ENCODE measurements at regions of chr16 and their contacts with region 1.

Region 1: DNA sequence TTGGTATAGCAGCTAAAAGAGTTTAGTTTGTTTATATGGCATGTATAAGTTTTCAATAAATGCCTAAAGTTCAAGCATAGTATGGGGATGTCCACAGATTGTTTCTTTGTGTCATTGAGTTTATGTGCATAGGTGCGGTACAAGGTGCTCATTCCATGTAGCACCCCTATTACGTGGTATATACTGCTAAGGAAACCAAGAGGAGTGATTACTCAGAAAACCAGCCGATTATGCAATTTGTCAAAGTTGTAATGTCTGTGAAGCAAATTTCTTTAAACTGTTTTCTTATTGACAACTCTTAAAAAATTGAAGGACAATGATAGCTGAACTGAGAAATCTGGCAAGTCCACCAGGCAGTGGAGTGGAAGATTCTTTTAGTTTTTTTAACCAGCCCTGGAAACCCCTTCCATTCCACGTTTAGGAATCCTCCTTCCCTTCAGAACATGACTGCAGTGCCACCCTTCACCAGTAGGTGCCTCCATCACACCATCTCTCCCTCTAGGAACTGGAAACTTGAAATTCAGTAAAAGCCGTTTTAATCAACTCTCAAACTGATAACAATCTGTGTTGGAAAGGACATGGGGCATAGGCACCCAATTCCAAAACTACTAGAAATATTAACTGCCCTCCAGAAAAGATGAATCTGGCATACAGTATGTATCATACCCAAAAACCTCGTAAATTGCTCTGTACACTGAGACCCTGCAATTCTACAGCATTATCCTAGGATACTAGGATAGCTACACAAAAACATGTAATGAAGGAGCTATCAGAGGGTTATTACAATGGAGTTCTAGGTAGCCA is 43.5 kb downstream of the REXO5 start:
- DNase-seq: peak; percentile 81
- H3K4me3 ChIP-seq: no peak overlapping the region
- H3K27ac ChIP-seq: no peak overlapping the region
- H3K4me1 ChIP-seq: peaks cover 42% of the 10 kb centered on the region
- H3K27me3 ChIP-seq: no peaks in the 10 kb centered on the region
- CTCF ChIP-seq: peak; percentile 88 to 96
- POLR2A ChIP-seq: peak; percentile 3

Region 2: GRCh38 chr16:20660325-20660724 is 189.5 kb before region 1 on chr16:
- CTCF ChIA-PET with region 1: no interaction called
- POLR2A ChIA-PET with region 1: no interaction called
- dilution Hi-C with region 1: no loop called
- intact Hi-C with region 1: no loop called
- DNase-seq: no peak
- H3K4me3 ChIP-seq: no peak overlapping the region
- H3K27ac ChIP-seq: no peak overlapping the region
- H3K4me1 ChIP-seq: no peaks in the 10 kb centered on the region
- H3K27me3 ChIP-seq: no peaks in the 10 kb centered on the region
- CTCF ChIP-seq: no peak
- POLR2A ChIP-seq: no peak

Region 3: DNA sequence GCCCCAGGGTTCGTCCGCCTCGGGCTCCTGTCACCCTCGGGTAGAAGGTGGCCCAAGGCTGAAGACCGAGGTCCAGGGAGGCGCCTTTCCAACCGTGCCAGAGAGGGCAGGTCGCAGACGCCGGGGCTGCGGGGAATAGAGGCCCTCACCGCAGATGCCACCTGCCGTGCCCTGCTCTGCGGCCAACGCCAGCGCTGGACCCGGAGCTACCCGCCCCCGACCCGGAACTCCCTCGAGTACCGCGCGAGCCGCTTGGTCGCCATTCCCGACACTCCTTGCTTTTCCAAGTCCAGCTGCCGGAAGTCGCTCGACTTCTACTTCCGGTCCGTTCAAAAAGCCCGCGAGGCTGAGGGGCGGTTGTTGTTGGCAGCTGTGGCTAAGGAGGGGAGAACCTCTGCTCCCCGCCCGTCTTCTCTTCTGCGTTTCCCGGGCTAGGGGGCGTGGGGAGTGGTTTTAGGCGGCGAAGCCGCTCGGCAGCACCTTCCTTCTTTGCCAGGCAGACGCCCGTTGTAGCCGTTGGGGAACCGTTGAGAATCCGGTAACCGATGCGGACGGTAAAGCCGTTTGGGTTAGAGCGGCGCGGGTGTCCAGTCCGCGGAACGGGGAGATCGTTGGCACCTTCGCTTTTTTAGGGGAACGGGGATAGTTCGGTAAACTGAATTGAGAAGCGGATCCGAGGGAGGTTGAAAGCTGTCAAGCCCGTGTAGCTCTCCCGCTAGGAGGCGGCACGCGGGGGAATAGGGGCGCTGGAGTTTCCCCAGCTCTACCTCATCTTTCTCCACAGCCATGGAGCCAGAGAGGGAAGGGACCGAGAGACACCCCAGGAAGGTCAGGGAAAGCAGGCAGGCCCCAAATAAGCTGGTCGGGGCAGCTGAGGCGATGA is 43.4 kb before region 1 on chr16 and contains the starts of genes ERI2 and REXO5:
- CTCF ChIA-PET with region 1: interaction called, 15 read pairs
- POLR2A ChIA-PET with region 1: interaction called, 3 read pairs
- dilution Hi-C with region 1: no loop called
- intact Hi-C with region 1: no loop called
- DNase-seq: peak; percentile 94
- H3K4me3 ChIP-seq: peak within 1 kb of the TSS; percentile 44 to 68 (median 50)
- H3K27ac ChIP-seq: peak within 1 kb of the TSS; percentile 49
- H3K4me1 ChIP-seq: peaks cover 8% of the 10 kb centered on the region
- H3K27me3 ChIP-seq: no peaks in the 10 kb centered on the region
- CTCF ChIP-seq: peak; percentile 36 to 66
- POLR2A ChIP-seq: peak; percentile 76
- total RNA-seq, gene ERI2: 8.9 and 9.3 TPM in 2 replicates
- total RNA-seq, gene REXO5: 7.4 and 11.5 TPM in 2 replicates

Region 4: DNA sequence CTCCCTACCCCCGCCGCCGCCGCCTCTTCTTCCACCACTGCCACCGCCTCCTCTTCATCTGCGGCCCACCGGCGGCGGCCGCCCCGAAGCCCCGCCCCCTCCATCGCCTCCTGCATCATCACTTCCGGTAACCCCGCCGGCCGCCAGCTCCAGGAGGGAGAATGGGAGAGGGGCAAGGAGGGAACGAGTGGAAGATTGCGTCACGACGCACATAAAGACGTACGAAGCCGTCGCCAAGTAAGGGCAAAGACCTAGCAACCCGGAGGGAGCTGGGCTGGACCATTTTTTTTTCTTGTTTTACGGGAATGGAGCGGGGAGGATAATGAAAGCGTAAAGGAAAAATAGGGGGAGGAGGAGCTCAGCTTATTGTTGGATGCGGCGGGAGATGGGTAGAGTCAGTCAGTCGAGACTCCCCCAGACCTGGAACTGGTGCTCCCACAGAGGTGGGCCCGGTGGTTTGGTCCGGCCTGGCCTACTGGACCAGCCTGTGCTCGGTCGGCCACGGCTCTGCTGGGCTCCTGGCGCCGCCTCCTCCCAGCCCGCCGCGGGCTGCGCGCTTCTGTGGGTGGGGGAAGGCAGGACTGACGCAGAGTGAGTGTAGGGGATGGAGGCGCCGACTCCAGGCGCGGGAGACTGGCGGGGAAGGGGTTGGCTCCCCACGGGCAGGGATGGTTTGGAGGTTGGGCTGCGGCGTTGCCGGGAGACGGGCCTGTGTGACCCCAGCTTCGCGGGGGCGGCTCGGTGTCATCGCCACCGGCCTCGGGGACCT is 50.7 kb after region 1 on chr16 and contains the starts of genes DCUN1D3 and LYRM1:
- CTCF ChIA-PET with region 1: interaction called, 33 read pairs
- POLR2A ChIA-PET with region 1: interaction called, 15 read pairs
- dilution Hi-C with region 1: no loop called
- intact Hi-C with region 1: loop called (anchors 1 kb)
- DNase-seq: peak; percentile 99
- H3K4me3 ChIP-seq: peak within 1 kb of the TSS; percentile 56 to 96 (median 83)
- H3K27ac ChIP-seq: peak within 1 kb of the TSS; percentile 100
- H3K4me1 ChIP-seq: peaks cover 58% of the 10 kb centered on the region
- H3K27me3 ChIP-seq: no peaks in the 10 kb centered on the region
- CTCF ChIP-seq: no peak
- POLR2A ChIP-seq: peak; percentile 78
- total RNA-seq, gene DCUN1D3: 35.0 and 39.6 TPM in 2 replicates
- total RNA-seq, gene LYRM1: 28.4 and 29.1 TPM in 2 replicates

Region 5: GRCh38 chr16:21076186-21076883 is 226.5 kb after region 1 on chr16:
- CTCF ChIA-PET with region 1: interaction called, 42 read pairs
- POLR2A ChIA-PET with region 1: no interaction called
- dilution Hi-C with region 1: no loop called
- intact Hi-C with region 1: no loop called
- DNase-seq: peak; percentile 37
- H3K4me3 ChIP-seq: no peak overlapping the region
- H3K27ac ChIP-seq: peak overlapping the region; percentile 46
- H3K4me1 ChIP-seq: peaks cover 15% of the 10 kb centered on the region
- H3K27me3 ChIP-seq: no peaks in the 10 kb centered on the region
- CTCF ChIP-seq: no peak
- POLR2A ChIP-seq: no peak

Region 6: DNA sequence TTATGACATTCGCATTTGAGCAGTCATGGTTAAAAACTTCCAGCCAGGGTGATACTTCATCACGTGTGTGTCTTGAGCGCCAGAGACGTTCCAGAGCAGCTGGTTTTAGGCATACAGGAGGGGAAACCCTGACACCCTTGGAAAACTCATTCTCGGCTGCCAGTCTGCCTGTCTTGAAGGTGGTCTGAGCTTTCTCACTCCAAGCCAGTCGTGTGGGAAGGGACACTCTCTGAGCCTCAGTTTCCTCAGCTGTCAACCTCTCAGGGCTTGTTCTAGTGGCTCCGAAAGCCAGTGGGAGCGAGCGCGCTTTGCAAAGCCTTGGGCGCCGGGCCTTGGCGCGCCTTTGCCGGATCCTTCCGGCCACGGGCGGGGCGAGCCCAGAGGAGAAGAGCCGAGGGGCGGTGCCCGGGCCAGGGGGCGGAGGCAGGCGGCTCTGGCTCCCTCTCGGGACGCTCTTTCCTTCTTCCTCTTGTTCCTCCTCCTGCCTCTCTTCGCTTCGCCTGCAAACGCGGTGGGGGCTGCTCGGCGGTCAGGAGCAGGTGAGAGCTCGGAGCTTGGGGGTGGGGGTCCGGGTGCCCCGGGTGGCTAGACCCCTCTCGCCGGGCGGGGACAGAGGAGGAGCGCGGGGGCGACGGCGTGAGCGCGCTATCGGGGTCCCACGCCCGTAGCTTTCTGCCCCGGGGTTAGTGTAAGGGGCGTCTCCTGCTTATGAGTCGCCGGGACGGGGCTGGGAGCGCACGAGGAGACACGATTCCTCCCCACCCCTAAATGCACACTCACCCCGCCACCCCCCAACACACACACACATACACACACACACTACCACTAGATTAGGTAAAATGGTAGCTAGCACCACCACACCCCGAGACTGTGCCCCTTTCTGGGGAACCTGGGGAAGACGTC is 308.7 kb after region 1 on chr16 and contains the start of gene LDAF1:
- CTCF ChIA-PET with region 1: interaction called, 18 read pairs
- POLR2A ChIA-PET with region 1: no interaction called
- dilution Hi-C with region 1: no loop called
- intact Hi-C with region 1: loop called (anchors 1 kb)
- DNase-seq: peak; percentile 62
- H3K4me3 ChIP-seq: peak within 1 kb of the TSS; percentile 58 to 83 (median 64)
- H3K27ac ChIP-seq: no peak within 1 kb of the TSS
- H3K4me1 ChIP-seq: peaks cover 13% of the 10 kb centered on the region
- H3K27me3 ChIP-seq: no peaks in the 10 kb centered on the region
- CTCF ChIP-seq: no peak
- POLR2A ChIP-seq: no peak
- total RNA-seq, gene LDAF1: 19.4 and 20.4 TPM in 2 replicates

Region 7: DNA sequence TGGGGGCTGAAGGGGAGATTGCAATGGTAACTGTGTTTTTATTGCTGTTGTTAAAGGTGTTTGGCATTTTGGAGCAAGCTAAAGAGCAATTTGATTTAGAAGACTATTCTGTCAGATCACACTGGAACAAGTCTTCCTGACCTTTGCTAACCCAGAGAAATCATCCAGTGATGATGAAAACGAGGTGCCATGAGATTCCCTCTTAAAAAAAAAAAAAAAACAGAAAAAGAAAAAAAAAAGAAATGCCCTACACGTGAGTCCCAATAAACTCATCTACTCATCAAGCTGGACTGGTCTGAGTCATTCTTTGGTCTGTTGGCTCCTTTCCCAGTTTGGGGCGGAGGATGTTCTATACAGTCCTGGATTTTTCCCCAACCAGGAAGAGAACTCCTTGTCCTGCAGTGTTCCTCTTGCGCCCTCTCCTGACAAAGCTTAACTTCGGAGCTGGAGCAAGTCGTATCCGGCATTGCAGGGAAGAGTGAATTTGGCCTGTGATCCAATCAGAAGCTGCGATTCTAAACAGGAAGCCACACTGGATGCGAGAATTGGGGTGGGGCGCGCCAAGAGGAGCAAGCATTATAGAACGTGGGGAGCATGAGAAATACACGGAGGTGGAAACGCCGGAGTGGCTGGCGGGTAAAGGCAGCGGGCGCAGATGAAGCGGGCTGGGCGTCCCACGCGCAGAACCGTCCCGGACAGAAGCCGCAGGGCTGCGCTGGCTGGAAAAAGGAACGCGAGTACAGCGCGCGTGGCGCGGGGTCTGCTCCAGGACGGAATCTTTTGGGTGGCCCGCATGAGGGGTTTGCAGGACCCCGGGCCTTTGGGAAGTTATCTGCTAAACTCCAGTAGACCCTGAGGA is 450.7 kb after region 1 on chr16:
- CTCF ChIA-PET with region 1: interaction called, 20 read pairs
- POLR2A ChIA-PET with region 1: no interaction called
- dilution Hi-C with region 1: no loop called
- intact Hi-C with region 1: loop called (anchors 1 kb)
- DNase-seq: peak; percentile 100
- H3K4me3 ChIP-seq: peak overlapping the region; percentile 61 to 65 (median 64)
- H3K27ac ChIP-seq: no peak overlapping the region
- H3K4me1 ChIP-seq: peaks cover 6% of the 10 kb centered on the region
- H3K27me3 ChIP-seq: peaks cover 2 to 12% of the 10 kb centered on the region in 2 experiments
- CTCF ChIP-seq: peak; percentile 80 to 95
- POLR2A ChIP-seq: no peak